Activated CD4-positive, alpha-beta memory T cell treated with anti-CD3 and anti-CD28 coated beads, Interleukin-2, amount 10 ng/mL, durations not matched to agents 7 days and 5 days (primary cell): ENCODE measurements at regions of chr2 and their contacts with region 1.

Region 1: DNA sequence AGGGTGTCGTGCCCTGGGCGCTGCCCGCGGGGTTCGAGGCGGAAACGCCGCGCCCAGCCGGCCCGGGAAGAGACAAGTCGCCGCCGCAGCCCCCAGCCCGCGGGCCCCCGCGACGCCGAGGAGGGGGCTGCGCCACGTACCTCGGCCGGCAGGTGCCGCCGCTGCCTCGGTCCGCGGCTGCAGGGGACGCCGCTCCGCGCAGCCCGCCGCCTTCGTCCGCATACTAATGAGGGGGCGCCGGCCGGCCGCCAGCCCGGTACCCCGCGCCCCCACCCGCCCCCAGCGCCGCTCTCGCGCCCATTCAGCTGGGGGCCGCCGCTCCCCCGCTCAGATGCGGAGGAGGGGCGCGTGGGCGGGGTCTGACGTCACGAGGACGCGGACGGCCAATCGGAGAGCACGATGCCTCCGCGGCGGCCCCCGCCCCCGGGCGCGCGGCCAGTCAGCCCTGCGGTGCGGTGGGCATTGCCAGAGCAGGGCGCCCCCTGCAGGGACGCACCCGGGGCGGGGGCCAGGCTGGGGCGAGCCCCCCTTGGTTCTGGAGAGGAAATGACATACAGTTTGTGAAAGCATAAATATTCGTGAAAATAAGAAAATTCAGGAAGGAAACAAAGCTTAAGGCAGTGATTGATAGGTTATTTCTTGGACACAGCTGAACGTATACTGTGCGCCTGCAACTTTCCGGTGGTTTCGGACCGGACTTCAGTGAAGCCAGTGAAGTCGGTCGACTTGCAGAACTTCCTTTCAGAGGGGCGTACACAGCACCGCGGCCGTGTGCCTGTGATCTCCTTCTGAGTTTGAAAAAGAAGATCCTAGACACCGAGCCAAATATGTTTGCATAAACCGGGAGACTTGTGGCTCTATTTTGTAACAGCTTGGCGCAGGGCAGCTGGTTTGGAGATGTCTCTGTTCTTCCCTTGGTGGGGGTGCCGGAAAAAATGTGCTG is at the start of gene ST3GAL5:
- DNase-seq: peak; percentile 92
- H3K4me3 Mint-ChIP-seq: peak within 1 kb of the TSS; percentile 84
- H3K27ac Mint-ChIP-seq: peak within 1 kb of the TSS; percentile 79
- H3K4me1 Mint-ChIP-seq: peaks cover 68% of the 10 kb centered on the region
- H3K27me3 Mint-ChIP-seq: peaks cover 3% of the 10 kb centered on the region
- total RNA-seq, gene ST3GAL5: 58.3 to 67.1 TPM

Region 2: DNA sequence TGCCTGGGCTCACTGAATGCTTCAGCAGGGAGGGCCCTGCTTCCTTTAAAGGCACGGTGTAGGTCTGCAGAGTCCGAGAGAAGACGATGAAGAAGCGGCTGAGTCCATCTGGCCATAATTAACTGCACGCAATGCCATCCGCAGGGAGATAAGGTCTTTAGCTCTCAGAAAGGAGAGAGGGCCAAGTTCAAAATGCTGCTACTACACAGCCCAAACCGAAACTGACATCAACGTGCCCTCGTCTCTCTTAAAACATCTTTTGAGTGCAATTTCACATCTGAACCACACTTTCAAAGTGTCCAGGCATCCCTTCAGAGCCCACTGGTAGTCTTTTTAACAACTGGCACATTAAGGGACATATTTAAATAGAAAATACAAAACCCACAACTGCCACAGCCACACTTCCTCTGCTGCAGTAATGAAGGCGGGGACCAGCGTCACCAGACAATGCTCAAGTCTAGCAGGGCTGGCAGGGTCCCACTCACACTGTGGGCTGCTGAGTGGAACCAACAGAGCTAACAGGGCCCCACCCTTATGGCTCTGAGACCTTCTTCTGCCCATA is 35.9 kb before region 1 on chr2:
- CTCF ChIA-PET with region 1: interaction called, 42 read pairs
- POLR2A ChIA-PET with region 1: interaction called, 59 read pairs
- DNase-seq: peak; percentile 80
- H3K4me3 Mint-ChIP-seq: peak overlapping the region; percentile 84
- H3K27ac Mint-ChIP-seq: peak overlapping the region; percentile 100
- H3K4me1 Mint-ChIP-seq: peaks cover 70% of the 10 kb centered on the region
- H3K27me3 Mint-ChIP-seq: no peaks in the 10 kb centered on the region

Region 3: GRCh38 chr2:85902496-85902895 is 13.5 kb after region 1 on chr2:
- CTCF ChIA-PET with region 1: interaction called, 29 read pairs
- POLR2A ChIA-PET with region 1: interaction called, 12 read pairs
- DNase-seq: no peak
- H3K4me3 Mint-ChIP-seq: no peak overlapping the region
- H3K27ac Mint-ChIP-seq: no peak overlapping the region
- H3K4me1 Mint-ChIP-seq: peaks cover 24% of the 10 kb centered on the region
- H3K27me3 Mint-ChIP-seq: peaks cover 6% of the 10 kb centered on the region

Region 4: GRCh38 chr2:86035883-86036668 is 147.1 kb after region 1 on chr2:
- CTCF ChIA-PET with region 1: interaction called, 132 read pairs
- POLR2A ChIA-PET with region 1: interaction called, 64 read pairs
- DNase-seq: peak; percentile 79
- H3K4me3 Mint-ChIP-seq: peak overlapping the region; percentile 54
- H3K27ac Mint-ChIP-seq: peak overlapping the region; percentile 99
- H3K4me1 Mint-ChIP-seq: peaks cover 71% of the 10 kb centered on the region
- H3K27me3 Mint-ChIP-seq: no peaks in the 10 kb centered on the region

Region 5: DNA sequence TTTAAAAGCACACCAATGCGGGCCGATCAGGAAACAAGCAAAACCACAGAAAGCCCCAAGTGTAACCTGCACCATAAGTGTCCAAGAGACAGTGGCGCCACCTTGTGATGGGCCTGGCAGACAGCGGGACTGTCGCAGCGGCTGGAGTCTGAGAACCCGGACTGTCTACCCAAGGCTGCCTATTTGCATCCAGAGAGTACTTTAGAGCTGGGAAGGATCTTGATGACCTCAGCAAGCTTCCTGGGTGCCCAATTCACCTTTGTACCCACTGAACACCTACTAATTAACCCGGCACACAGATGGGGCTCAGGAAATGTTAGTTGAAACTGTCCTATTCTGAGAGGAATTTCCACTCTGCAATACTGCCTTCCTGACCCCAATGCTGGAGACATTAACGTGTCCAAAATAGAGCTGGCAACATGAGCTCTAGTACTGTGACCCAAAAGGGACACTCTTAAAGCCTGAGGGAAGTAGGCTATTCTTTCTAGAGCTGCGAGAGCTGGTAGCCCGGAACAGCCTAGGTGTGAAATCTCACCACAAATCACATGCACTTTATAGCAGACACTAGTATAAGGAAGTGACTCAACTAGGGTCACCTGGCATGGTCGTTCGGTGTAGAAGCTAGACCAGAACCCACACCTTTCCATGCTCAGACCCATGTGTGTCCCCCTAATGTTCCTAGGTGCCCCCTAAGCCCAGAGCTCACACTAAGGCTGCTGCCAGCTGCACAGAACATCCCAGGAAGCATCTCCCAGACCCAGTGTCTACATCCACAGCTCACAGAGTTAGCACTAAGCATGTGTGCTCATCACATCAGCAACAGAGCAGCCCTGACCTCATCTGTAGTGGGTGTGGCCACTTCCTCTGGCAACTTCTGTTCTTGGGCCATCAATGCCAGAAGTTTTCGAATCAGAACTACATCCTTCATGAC is 191.3 kb after region 1 on chr2:
- CTCF ChIA-PET with region 1: interaction called, 150 read pairs
- POLR2A ChIA-PET with region 1: interaction called, 40 read pairs
- DNase-seq: peak; percentile 88
- H3K4me3 Mint-ChIP-seq: no peak overlapping the region
- H3K27ac Mint-ChIP-seq: peak overlapping the region; percentile 90
- H3K4me1 Mint-ChIP-seq: peaks cover 48% of the 10 kb centered on the region
- H3K27me3 Mint-ChIP-seq: no peaks in the 10 kb centered on the region